ENCODE measurements at regions of chr1 and their contacts with region 1.

Region 1: GRCh38 chr1:235423191-235423652 is 56.0 kb downstream of the TBCE start:
- DNase-seq: peak in 25 of 35 experiments; percentile 3 to 46 (median 14)
- ATAC-seq: peak; percentile 76 to 90 (median 81)
- H3K4me3 ChIP-seq: no peak overlapping the region
- H3K4me3 Mint-ChIP-seq: peak overlapping the region in 2 of 3 donors; percentile 10 to 67
- H3K27ac ChIP-seq: no peak overlapping the region
- H3K27ac Mint-ChIP-seq: peak overlapping the region; percentile 66 to 80
- H3K4me1 ChIP-seq: peaks cover 0 to 20% of the 10 kb centered on the region in 2 experiments
- H3K4me1 Mint-ChIP-seq: peaks cover 21 to 35% (median 23%) of the 10 kb centered on the region in 3 donors
- H3K27me3 ChIP-seq: no peaks in the 10 kb centered on the region
- H3K27me3 Mint-ChIP-seq: no peaks in the 10 kb centered on the region

Region 2: DNA sequence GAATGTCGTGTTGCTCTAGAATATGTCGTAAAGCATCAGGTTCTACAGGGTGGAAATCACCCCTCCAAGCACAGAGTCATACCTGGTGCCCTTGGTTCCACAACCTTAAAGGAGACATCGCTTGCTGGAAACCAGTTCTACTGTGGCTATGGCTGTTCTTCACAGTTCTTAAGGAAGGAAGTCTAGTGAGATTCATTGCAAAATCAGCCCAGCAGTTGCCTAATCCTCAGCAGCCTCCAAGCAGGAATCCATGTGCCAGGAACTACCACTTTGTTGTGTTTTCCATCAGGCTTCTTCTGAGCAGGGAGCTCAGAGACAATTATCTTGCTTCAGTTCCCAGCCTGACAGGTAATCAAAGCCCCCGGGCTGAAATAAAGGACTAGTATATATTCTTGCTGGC is 1563.8 kb before region 1 on chr1:
- CTCF ChIA-PET with region 1: no interaction called
- POLR2A ChIA-PET with region 1: no interaction called
- DNase-seq: no peak
- ATAC-seq: no peak
- H3K4me3 ChIP-seq: no peak overlapping the region
- H3K4me3 Mint-ChIP-seq: no peak overlapping the region
- H3K27ac ChIP-seq: no peak overlapping the region
- H3K27ac Mint-ChIP-seq: no peak overlapping the region
- H3K4me1 ChIP-seq: no peaks in the 10 kb centered on the region
- H3K4me1 Mint-ChIP-seq: no peaks in the 10 kb centered on the region
- H3K27me3 ChIP-seq: peaks cover 0 to 2% of the 10 kb centered on the region in 2 experiments
- H3K27me3 Mint-ChIP-seq: peaks cover 6 to 12% of the 10 kb centered on the region in 2 donors

Region 3: GRCh38 chr1:235169986-235170385 is 253.2 kb before region 1 on chr1:
- CTCF ChIA-PET with region 1: no interaction called
- POLR2A ChIA-PET with region 1: interaction called in 1 of 2 experiments, 12 read pairs
- DNase-seq: no peak
- ATAC-seq: no peak
- H3K4me3 ChIP-seq: no peak overlapping the region
- H3K4me3 Mint-ChIP-seq: no peak overlapping the region
- H3K27ac ChIP-seq: no peak overlapping the region
- H3K27ac Mint-ChIP-seq: no peak overlapping the region
- H3K4me1 ChIP-seq: no peaks in the 10 kb centered on the region
- H3K4me1 Mint-ChIP-seq: no peaks in the 10 kb centered on the region
- H3K27me3 ChIP-seq: no peaks in the 10 kb centered on the region
- H3K27me3 Mint-ChIP-seq: no peaks in the 10 kb centered on the region

Region 4: GRCh38 chr1:235434001-235434400 is 10.8 kb after region 1 on chr1:
- CTCF ChIA-PET with region 1: no interaction called
- POLR2A ChIA-PET with region 1: interaction called in 1 of 2 experiments, 13 read pairs
- DNase-seq: no peak
- ATAC-seq: no peak
- H3K4me3 ChIP-seq: no peak overlapping the region
- H3K4me3 Mint-ChIP-seq: no peak overlapping the region
- H3K27ac ChIP-seq: no peak overlapping the region
- H3K27ac Mint-ChIP-seq: no peak overlapping the region
- H3K4me1 ChIP-seq: no peaks in the 10 kb centered on the region
- H3K4me1 Mint-ChIP-seq: no peaks in the 10 kb centered on the region
- H3K27me3 ChIP-seq: no peaks in the 10 kb centered on the region
- H3K27me3 Mint-ChIP-seq: no peaks in the 10 kb centered on the region

Measured in T-cell (primary cell).